ENCODE measurements at regions of chr1 and their contacts with region 1.

Region 1: GRCh38 chr1:211476200-211476849 is 15.6 kb downstream of the RD3 start:
- DNase-seq: peak; percentile 20
- ATAC-seq: peak; percentile 96
- H3K4me3 ChIP-seq: no peak overlapping the region
- H3K27ac ChIP-seq: no peak overlapping the region
- H3K4me1 ChIP-seq: no peaks in the 10 kb centered on the region
- H3K27me3 ChIP-seq: peaks cover 1 to 7% of the 10 kb centered on the region in 2 experiments; a peak in 2 of 4 replicates
- CTCF ChIP-seq: peak; percentile 84 to 91 (median 90)
- EP300 ChIP-seq: no peak
- POLR2A ChIP-seq: no peak
- RAD21 ChIP-seq: peak; percentile 75

Region 2: DNA sequence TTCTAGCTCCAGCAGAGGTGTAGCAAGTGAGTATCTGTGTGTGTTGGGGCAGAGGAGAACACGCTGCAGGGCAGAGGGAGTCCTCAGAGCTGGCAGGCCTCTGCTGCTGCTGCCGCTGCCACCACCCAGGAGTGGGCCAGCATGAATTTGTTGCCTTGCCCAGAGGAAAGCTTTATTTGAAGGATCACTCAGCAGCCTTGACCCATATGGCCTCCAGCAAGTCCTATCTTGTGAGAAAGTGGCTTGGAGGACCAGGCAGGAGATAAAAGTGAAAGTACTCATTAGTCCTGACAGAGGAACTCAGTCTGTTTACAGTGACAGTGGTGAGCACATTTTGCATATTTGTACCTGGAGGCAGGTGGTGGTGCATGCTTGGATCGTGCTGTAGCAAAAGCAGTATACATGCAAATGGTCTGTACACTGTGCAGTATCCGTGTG is 146.5 kb before region 1 on chr1:
- CTCF ChIA-PET with region 1: interaction called, 15 read pairs
- POLR2A ChIA-PET with region 1: interaction called, 4 read pairs
- RAD21 ChIA-PET with region 1: interaction called, 4 read pairs
- SMC1A ChIA-PET with region 1: interaction called, 12 read pairs
- in situ Hi-C with region 1: loop called (anchors 5 kb)
- intact Hi-C with region 1: no loop called
- DNase-seq: no peak
- ATAC-seq: peak; percentile 50
- H3K4me3 ChIP-seq: peak overlapping the region; percentile 65
- H3K27ac ChIP-seq: peak overlapping the region; percentile 81
- H3K4me1 ChIP-seq: peaks cover 51% of the 10 kb centered on the region
- H3K27me3 ChIP-seq: no peaks in the 10 kb centered on the region
- CTCF ChIP-seq: no peak
- EP300 ChIP-seq: no peak
- POLR2A ChIP-seq: no peak
- RAD21 ChIP-seq: no peak

Region 3: GRCh38 chr1:211415700-211416099 is 60.6 kb before region 1 on chr1:
- CTCF ChIA-PET with region 1: interaction called, 13 read pairs
- POLR2A ChIA-PET with region 1: no interaction called
- RAD21 ChIA-PET with region 1: interaction called, 3 read pairs
- SMC1A ChIA-PET with region 1: interaction called, 5 read pairs
- in situ Hi-C with region 1: no loop called
- intact Hi-C with region 1: no loop called
- DNase-seq: no peak
- ATAC-seq: no peak
- H3K4me3 ChIP-seq: no peak overlapping the region
- H3K27ac ChIP-seq: no peak overlapping the region
- H3K4me1 ChIP-seq: no peaks in the 10 kb centered on the region
- H3K27me3 ChIP-seq: no peaks in the 10 kb centered on the region
- CTCF ChIP-seq: no peak
- EP300 ChIP-seq: no peak
- POLR2A ChIP-seq: no peak
- RAD21 ChIP-seq: no peak